ENCODE measurements at regions of chr1 and their contacts with region 1.

Region 1: GRCh38 chr1:226062558-226063223 is at the start of gene H3-3A:
- DNase-seq: peak; percentile 93 to 99 (median 97)

Region 2: GRCh38 chr1:225428068-225428880 is 634.4 kb before region 1 on chr1:
- intact Hi-C with region 1: loop called (anchors 2 kb)
- DNase-seq: peak; percentile 89 to 100 (median 94)

Region 3: GRCh38 chr1:225999227-225999911 is 63.3 kb before region 1 on chr1 and contains the start of gene SDE2:
- intact Hi-C with region 1: loop called (anchors 2 kb)
- DNase-seq: peak; percentile 98 to 100 (median 100)

Region 4: DNA sequence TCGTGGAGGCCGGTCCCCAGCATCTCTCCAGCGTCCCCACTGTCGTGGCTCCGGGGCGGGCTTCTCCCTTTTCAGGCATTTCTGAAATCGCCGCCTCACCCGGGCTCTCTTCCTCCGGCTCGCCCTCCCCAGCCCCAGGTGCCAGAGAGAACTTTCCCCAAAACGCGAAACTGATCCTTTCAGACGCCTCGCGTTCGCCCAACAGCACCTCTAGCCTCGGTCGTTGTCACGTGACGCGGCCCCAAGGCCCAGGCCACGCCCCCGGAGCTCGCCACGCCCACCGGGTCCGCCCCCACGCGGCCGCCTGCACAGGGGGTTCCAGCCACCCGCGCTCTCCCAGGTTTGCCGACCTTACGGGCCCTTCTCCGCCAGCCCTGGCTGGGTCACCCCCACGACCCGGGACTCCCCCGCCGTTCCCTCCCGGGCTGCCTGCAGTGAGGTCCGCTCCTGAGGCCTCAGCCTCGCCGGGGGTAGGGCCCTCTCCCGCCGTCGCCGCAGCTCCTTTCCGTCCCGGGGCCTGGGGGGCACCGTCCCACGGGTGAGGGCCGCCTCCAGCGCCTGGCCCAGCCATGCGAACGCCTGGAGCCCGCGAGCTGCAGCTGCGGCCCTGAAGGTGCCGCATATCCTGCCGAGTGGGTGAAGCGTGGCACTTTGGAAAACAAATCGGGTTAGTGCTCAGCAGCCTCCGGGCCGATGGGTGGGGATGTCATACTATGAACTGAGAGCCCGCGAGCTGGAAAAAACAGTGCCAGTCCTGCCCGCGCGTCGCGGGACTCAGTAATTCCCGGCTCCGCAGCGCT is 20.8 kb after region 1 on chr1:
- intact Hi-C with region 1: loop called (anchors 1 kb)
- DNase-seq: peak; percentile 82 to 98 (median 93)

Region 5: GRCh38 chr1:226109829-226110248 is 47.1 kb after region 1 on chr1:
- intact Hi-C with region 1: loop called (anchors 1 kb)
- DNase-seq: peak; percentile 73 to 98 (median 90)

Region 6: DNA sequence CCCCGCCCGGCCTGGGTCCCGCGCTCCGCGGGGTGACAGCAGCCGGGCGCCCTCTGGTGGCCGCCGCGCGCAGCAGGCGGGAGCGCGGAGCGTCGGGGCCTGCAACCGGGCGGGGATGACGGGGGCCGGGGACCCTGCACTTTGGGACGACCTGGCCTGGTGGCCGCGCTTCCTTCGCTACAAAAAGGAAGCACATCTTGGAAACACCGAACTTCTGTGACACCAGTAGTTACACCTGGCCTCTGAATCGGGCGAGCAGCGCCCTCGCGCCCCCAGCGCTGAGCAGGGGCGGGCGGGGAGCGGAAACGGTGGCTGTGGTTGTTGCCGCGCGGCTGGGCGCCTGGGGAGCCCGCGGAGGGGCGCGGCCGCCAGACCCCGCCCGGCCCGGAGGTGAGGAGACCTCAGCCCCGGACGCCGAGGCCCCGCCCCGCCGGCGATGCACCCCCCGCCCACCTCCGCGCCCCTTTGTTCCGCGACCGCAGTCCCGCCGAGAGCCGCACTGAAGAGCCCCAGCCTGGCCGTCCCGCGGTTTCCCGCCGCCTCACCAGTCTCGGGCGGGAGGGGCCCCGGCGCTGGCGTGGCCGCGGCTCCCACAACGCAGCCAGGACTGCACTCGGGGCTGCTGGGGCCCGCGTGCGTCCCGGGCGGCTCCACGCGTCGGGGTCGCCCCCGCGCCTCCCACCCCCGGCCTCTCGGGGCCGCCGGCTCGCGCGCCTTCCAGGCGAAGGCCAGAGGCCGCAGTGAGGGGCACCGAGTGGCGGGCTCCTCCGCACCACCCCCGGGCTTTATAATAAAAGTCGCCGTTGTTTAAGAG is 59.1 kb after region 1 on chr1:
- intact Hi-C with region 1: loop called (anchors 1 kb)
- DNase-seq: peak in 9 of 10 donors; percentile 18 to 93 (median 54)

Region 7: GRCh38 chr1:226186124-226187018 is 123.7 kb after region 1 on chr1 and contains the start of gene ACBD3:
- intact Hi-C with region 1: loop called (anchors 10 kb)
- DNase-seq: peak; percentile 86 to 98 (median 90)

Measured in posterior cingulate gyrus (tissue), 11 donors.